H1 (cell line): ENCODE measurements at regions of chr21 and their contacts with region 1.

Region 1: DNA sequence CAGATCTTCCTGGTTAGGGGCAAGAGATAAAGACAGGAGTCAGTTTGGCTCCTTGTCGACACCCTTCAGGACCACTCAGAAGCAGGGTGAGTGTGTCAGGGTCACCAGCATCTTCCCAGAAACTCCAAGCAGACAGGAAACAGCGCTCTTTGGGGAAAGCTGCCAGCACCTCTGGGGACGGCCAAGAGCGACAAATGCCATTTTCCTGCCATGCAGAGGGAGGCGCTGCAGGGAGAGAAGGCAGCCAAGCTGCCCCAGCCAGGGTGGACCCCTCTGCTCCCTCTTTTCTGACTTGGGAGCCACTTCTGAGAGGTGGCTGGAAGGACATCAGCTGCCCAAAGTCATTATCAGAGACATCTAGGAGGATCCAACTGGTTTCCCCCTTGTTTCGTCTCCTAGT is 29.0 kb downstream of the SIM2 start:
- DNase-seq: no peak
- H3K4me3 ChIP-seq: no peak overlapping the region
- H3K27ac ChIP-seq: no peak overlapping the region
- H3K4me1 ChIP-seq: no peaks in the 10 kb centered on the region
- H3K27me3 ChIP-seq: no peaks in the 10 kb centered on the region
- CTCF ChIP-seq: peak; percentile 75 to 85 (median 83)
- EP300 ChIP-seq: no peak
- POLR2A ChIP-seq: no peak
- RAD21 ChIP-seq: peak; percentile 62 to 69

Region 2: GRCh38 chr21:36706951-36707762 is 20.7 kb before region 1 on chr21:
- CTCF ChIA-PET with region 1: interaction called, 10 read pairs
- POLR2A ChIA-PET with region 1: interaction called, 5 read pairs
- DNase-seq: peak in 1 of 2 experiments; percentile 64
- H3K4me3 ChIP-seq: peak overlapping the region in 2 of 4 experiments; percentile 0 to 57; a peak in 2 of 8 replicates
- H3K27ac ChIP-seq: no peak overlapping the region
- H3K4me1 ChIP-seq: peaks cover 0 to 41% (median 32%) of the 10 kb centered on the region in 4 experiments; a peak in 6 of 7 replicates
- H3K27me3 ChIP-seq: peaks cover 76 to 98% (median 85%) of the 10 kb centered on the region in 4 experiments
- CTCF ChIP-seq: no peak
- EP300 ChIP-seq: no peak
- POLR2A ChIP-seq: no peak
- RAD21 ChIP-seq: peak; percentile 2 to 6; a peak in 1 of 4 replicates

Region 3: DNA sequence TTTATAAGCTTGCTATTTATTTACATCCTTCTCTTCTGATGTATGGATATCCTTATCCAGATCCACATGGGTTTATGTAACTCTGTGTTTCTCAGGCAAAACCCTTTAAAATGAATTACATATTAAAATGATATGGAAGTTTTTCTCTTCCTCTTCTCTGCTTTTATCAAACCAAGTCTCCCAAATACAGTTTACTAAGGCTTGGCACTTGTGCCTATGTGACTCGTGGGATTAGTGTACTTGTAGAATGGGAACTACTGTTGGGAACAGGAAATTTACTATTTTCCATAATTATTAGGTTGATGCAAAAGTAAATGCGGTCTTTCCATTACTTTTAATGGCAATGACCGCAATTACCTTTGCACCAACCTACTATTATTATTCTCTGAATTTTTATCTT is 14.1 kb before region 1 on chr21:
- CTCF ChIA-PET with region 1: interaction called, 15 read pairs
- POLR2A ChIA-PET with region 1: interaction called, 5 read pairs
- DNase-seq: no peak
- H3K4me3 ChIP-seq: no peak overlapping the region
- H3K27ac ChIP-seq: no peak overlapping the region
- H3K4me1 ChIP-seq: peaks cover 2 to 10% (median 7%) of the 10 kb centered on the region in 4 experiments
- H3K27me3 ChIP-seq: peaks cover 11 to 44% (median 22%) of the 10 kb centered on the region in 4 experiments
- CTCF ChIP-seq: no peak
- EP300 ChIP-seq: no peak
- POLR2A ChIP-seq: no peak
- RAD21 ChIP-seq: no peak

Region 4: DNA sequence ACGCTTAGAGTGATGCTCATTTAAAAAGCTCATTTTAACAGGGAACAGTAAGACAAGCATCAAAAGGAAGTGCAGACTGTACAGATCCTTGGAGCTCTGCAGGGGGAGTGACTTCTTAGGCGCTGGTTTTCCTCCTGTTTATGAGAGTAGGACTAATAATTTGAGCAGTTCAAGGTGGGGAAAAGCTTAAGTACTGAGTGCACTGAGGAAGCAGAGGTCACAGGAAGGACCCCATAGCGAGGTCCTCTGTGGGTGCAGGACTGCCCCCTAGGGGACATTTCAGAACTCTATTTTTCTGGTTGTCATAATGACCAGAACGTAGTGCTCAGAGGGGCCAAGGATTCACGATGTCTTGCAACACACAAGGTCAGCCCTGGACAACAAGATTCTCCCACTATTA is 126.5 kb after region 1 on chr21:
- CTCF ChIA-PET with region 1: interaction called, 13 read pairs
- POLR2A ChIA-PET with region 1: no interaction called
- DNase-seq: peak; percentile 29 to 81
- H3K4me3 ChIP-seq: no peak overlapping the region
- H3K27ac ChIP-seq: no peak overlapping the region
- H3K4me1 ChIP-seq: peaks cover 0 to 2% (median 1%) of the 10 kb centered on the region in 4 experiments; a peak in 2 of 7 replicates
- H3K27me3 ChIP-seq: no peaks in the 10 kb centered on the region
- CTCF ChIP-seq: peak; percentile 67 to 87 (median 86)
- EP300 ChIP-seq: no peak
- POLR2A ChIP-seq: no peak
- RAD21 ChIP-seq: peak; percentile 82 to 92